ENCODE measurements at regions of chr10 and their contacts with region 1.

Region 1: DNA sequence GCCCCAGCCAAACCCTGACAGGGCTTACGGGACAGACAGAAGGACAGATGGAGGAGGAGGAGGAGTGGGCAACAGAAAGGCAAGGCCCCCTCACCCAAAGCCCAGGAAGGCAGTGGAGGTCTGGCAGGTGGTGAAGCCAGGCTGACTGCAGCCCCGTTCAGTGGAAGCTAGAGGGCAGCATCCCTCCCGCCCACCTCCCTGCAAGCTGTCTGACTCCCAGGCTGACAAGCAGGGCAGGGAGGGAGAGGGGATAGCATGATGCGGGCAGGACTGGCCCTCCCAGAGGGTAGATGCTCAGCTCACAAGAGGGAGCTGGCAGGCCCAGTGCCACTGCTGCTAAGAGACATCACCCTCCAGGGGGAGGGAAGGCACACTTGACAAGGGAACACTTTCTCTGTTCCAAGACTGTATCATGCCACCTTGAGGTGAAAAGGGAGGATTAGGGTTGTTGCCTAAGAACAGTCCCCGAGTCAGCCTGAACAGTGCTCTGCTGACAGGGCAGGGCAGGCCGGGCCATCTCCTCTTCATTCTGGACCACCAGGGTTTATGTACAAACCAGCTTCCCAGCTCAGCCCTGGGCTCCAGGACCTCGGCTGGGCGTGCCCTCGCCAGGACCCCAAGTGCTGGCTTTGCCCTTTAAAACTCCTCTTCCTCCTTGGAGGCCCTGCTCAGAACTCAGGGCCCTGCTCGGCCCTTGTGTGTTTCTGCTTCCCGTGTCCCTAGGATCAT is 61.8 kb downstream of the RASGEF1A start:
- DNase-seq: peak; percentile 68 to 81
- ATAC-seq: peak; percentile 78 to 86
- H3K4me3 ChIP-seq: no peak overlapping the region
- H3K27ac ChIP-seq: peak overlapping the region in 1 of 2 experiments; percentile 10; a peak in 1 of 6 replicates
- H3K4me1 ChIP-seq: no peaks in the 10 kb centered on the region
- CTCF ChIP-seq: peak; percentile 83
- EP300 ChIP-seq: no peak
- POLR2A ChIP-seq: no peak
- RAD21 ChIP-seq: peak; percentile 46 to 56

Region 2: DNA sequence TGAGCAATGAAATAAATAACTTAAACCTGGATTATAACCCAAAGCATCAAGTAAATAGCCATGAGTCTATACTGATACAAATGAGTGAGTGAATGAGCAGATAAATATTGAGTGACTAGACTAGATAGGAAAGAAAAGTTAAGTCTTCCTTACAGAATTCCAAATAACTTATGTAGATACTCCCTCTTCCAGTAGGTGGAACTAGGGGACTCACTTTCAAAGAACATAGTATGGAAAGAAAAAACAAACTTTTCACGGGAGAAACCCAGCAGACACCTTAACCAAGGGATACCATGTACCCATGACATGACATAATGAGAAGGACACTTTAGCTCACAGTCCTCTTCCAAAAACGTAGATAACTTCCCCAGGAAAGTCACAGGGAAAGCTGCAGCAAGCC is 34.6 kb before region 1 on chr10:
- CTCF ChIA-PET with region 1: interaction called, 24 read pairs
- POLR2A ChIA-PET with region 1: interaction called, 3 read pairs
- DNase-seq: peak in 1 of 2 experiments; percentile 22
- ATAC-seq: peak; percentile 67 to 70; a peak in 5 of 6 replicates
- H3K4me3 ChIP-seq: no peak overlapping the region
- H3K27ac ChIP-seq: no peak overlapping the region
- H3K4me1 ChIP-seq: no peaks in the 10 kb centered on the region
- CTCF ChIP-seq: no peak; the same call in 2 of the 3 replicates
- EP300 ChIP-seq: no peak
- POLR2A ChIP-seq: no peak
- RAD21 ChIP-seq: peak in 1 of 2 experiments; percentile 31; a peak in 2 of 5 replicates

Region 3: GRCh38 chr10:43193496-43194080 is 11.5 kb before region 1 on chr10:
- CTCF ChIA-PET with region 1: interaction called, 39 read pairs
- POLR2A ChIA-PET with region 1: no interaction called
- DNase-seq: no peak
- ATAC-seq: no peak
- H3K4me3 ChIP-seq: no peak overlapping the region
- H3K27ac ChIP-seq: no peak overlapping the region
- H3K4me1 ChIP-seq: no peaks in the 10 kb centered on the region
- CTCF ChIP-seq: no peak
- EP300 ChIP-seq: no peak
- POLR2A ChIP-seq: no peak
- RAD21 ChIP-seq: no peak